ENCODE measurements at regions of chr11 and their contacts with region 1.

Region 1: GRCh38 chr11:72668611-72669347 is 5.4 kb downstream of the PDE2A start:
- DNase-seq: peak; percentile 43
- H3K4me3 Mint-ChIP-seq: peak overlapping the region; percentile 52
- H3K27ac Mint-ChIP-seq: peak overlapping the region; percentile 71
- H3K4me1 Mint-ChIP-seq: peaks cover 15% of the 10 kb centered on the region
- H3K27me3 Mint-ChIP-seq: peaks cover 33% of the 10 kb centered on the region

Region 2: GRCh38 chr11:72112321-72113219 is 556.2 kb before region 1 on chr11 and contains the start of gene ANAPC15:
- intact Hi-C with region 1: loop called (anchors 1 kb)
- DNase-seq: peak; percentile 97
- H3K4me3 Mint-ChIP-seq: peak within 1 kb of the TSS; percentile 90
- H3K27ac Mint-ChIP-seq: peak within 1 kb of the TSS; percentile 98
- H3K4me1 Mint-ChIP-seq: peaks cover 28% of the 10 kb centered on the region
- H3K27me3 Mint-ChIP-seq: no peaks in the 10 kb centered on the region
- total RNA-seq, gene ANAPC15: 49.4 and 51.9 TPM in 2 replicates

Region 3: DNA sequence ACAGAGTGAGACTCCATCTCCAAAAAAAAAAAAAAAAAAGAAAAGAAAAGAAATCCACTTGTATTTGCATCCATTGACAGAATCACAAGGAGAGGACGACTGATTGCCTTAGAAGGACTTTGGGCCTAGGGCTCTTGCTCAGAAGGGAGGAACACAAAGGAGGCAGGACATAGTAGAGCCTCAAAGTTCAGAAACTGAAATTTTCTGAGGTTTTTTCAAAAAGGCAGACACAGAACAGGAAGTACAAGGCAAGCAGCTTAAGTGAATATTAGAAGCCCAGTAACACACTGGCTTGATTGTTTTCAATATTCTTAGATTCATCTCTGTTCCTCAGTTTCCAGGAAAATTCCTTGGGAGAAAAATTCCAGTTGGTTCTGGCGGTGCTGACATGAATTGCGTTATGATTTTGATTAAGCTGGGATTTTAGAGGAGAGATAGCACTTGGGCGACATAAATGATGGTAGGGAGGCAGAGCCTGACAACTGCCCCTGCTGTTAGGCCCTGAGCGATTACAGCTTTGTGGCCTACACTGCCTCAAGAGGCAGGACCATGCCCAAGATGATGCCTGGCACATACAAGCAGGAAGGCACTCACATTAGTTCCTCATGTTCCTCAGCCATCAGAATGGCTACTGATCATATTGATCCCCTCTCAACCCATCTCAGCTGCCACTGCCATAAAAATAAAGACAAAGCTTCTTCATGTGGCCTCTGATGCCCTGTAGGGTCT is 249.8 kb before region 1 on chr11:
- intact Hi-C with region 1: no loop called
- DNase-seq: no peak
- H3K4me3 Mint-ChIP-seq: peak overlapping the region; percentile 21
- H3K27ac Mint-ChIP-seq: peak overlapping the region; percentile 36
- H3K4me1 Mint-ChIP-seq: peaks cover 41% of the 10 kb centered on the region
- H3K27me3 Mint-ChIP-seq: no peaks in the 10 kb centered on the region

Region 4: DNA sequence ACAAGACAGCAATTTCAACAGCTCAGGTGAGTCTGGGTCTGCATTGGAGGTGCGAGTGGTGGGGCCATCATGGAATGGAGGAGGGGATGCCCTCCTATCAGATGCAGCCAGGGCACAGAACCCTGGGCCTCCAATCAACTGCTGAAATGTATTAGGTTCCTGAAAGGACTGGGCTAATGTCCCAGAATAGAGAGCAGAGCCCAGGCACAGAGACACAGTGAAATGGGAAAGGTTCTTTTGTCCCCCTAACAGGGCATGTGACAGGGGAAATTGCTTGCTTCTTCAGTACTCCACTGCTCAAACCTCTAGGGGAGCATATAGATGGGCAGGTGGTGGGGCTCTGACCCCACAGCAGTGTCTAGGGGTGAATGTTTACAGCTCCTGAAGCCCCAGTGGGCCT is 147.1 kb before region 1 on chr11:
- intact Hi-C with region 1: loop called (anchors 1 kb)
- DNase-seq: no peak
- H3K4me3 Mint-ChIP-seq: no peak overlapping the region
- H3K27ac Mint-ChIP-seq: no peak overlapping the region
- H3K4me1 Mint-ChIP-seq: peaks cover 29% of the 10 kb centered on the region
- H3K27me3 Mint-ChIP-seq: peaks cover 7% of the 10 kb centered on the region

Region 5: DNA sequence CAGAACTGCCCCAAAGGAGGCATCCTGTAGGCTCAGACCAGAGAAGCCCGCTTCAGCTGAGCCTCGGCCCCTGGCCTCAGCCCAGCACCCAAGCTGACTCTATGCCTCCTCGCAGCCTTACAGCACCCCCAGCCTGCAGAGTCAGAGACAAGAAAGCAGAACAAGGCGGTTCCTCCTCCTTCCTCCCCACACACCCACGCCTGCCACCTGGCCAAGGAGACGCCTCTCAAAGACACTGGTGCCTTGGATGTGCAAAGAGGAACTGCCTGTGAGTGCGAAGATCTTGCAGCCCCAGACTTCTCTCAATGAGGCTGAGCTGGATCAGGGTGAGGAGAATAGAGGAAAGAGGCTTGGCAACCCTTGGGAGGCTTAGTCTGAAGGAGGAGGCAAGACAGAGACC is 54.8 kb before region 1 on chr11:
- intact Hi-C with region 1: loop called (anchors 2 kb)
- DNase-seq: no peak
- H3K4me3 Mint-ChIP-seq: no peak overlapping the region
- H3K27ac Mint-ChIP-seq: no peak overlapping the region
- H3K4me1 Mint-ChIP-seq: peaks cover 22% of the 10 kb centered on the region
- H3K27me3 Mint-ChIP-seq: peaks cover 12% of the 10 kb centered on the region

Region 6: GRCh38 chr11:72683782-72684200 is 15.0 kb after region 1 on chr11:
- intact Hi-C with region 1: loop called (anchors 1 kb)
- DNase-seq: peak; percentile 49
- H3K4me3 Mint-ChIP-seq: no peak overlapping the region
- H3K27ac Mint-ChIP-seq: peak overlapping the region; percentile 50
- H3K4me1 Mint-ChIP-seq: peaks cover 43% of the 10 kb centered on the region
- H3K27me3 Mint-ChIP-seq: peaks cover 10% of the 10 kb centered on the region

Region 7: GRCh38 chr11:73360336-73361013 is 691.7 kb after region 1 on chr11:
- intact Hi-C with region 1: no loop called
- DNase-seq: no peak
- H3K4me3 Mint-ChIP-seq: no peak overlapping the region
- H3K27ac Mint-ChIP-seq: no peak overlapping the region
- H3K4me1 Mint-ChIP-seq: no peaks in the 10 kb centered on the region
- H3K27me3 Mint-ChIP-seq: peaks cover 2% of the 10 kb centered on the region